Caco-2 (cell line): ENCODE measurements at regions of chr4 and their contacts with region 1.

Region 1: DNA sequence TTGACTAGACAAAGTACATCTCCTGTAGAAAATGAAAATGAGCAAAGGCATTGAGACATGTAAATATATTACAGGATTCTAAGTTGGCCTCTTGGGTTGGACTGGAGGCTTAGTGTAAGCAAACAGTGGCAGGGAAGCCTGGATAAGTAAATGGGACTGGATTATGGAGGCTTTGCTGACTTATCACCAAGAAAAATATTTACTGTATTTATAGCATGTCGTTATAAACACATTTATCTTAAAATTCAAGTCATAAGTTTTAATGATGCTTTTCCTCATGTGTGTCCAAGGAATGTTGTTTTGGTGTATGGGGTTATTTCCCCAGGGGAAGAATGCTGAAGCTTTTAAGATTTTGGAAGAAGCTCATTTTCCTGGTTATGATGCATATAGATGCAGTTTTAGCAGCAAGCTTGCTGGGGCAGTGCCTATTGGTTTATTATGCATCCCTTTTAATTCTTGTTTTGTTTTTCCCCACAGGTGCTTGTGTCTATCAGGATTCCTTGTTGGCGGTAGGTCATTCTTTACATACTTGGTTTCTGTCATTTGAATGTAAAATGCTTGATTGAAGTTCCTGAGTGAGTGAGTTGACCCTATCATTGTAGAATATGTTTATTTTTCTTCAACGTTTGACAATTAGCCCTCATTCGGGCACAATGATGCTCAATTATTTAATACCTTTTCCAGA is 8.5 kb downstream of the FRAS1 start:
- DNase-seq: peak in 1 of 2 experiments; percentile 19
- H3K4me3 ChIP-seq: no peak overlapping the region
- H3K4me3 Mint-ChIP-seq: no peak overlapping the region
- H3K27ac Mint-ChIP-seq: no peak overlapping the region
- H3K4me1 ChIP-seq: peaks cover 4% of the 10 kb centered on the region
- H3K4me1 Mint-ChIP-seq: peaks cover 17% of the 10 kb centered on the region
- H3K27me3 ChIP-seq: no peaks in the 10 kb centered on the region
- H3K27me3 Mint-ChIP-seq: no peaks in the 10 kb centered on the region
- CTCF ChIP-seq: no peak

Region 2: GRCh38 chr4:78149751-78150542 is 84.3 kb after region 1 on chr4:
- CTCF ChIA-PET with region 1: no interaction called
- POLR2A ChIA-PET with region 1: no interaction called
- intact Hi-C with region 1: loop called (anchors 1 kb)
- DNase-seq: no peak
- H3K4me3 ChIP-seq: no peak overlapping the region
- H3K4me3 Mint-ChIP-seq: peak overlapping the region; percentile 40
- H3K27ac Mint-ChIP-seq: no peak overlapping the region
- H3K4me1 ChIP-seq: peaks cover 27% of the 10 kb centered on the region
- H3K4me1 Mint-ChIP-seq: peaks cover 29% of the 10 kb centered on the region
- H3K27me3 ChIP-seq: no peaks in the 10 kb centered on the region
- H3K27me3 Mint-ChIP-seq: no peaks in the 10 kb centered on the region
- CTCF ChIP-seq: no peak